Endothelial cell of umbilical vein (primary cell): ENCODE measurements at regions of chr3 and their contacts with region 1.

Region 1: GRCh38 chr3:111967651-111968274 is 11.1 kb upstream of the ABHD10 start:
- DNase-seq: peak; percentile 84
- H3K4me3 ChIP-seq: no peak overlapping the region
- H3K27ac ChIP-seq: peak overlapping the region; percentile 88
- H3K4me1 ChIP-seq: peaks cover 26% of the 10 kb centered on the region
- H3K27me3 ChIP-seq: no peaks in the 10 kb centered on the region
- CTCF ChIP-seq: peak; percentile 78 to 87
- POLR2A ChIP-seq: no peak

Region 2: GRCh38 chr3:111859974-111860859 is 107.5 kb before region 1 on chr3:
- CTCF ChIA-PET with region 1: interaction called, 53 read pairs
- POLR2A ChIA-PET with region 1: interaction called, 6 read pairs
- dilution Hi-C with region 1: no loop called
- intact Hi-C with region 1: loop called (anchors 1 kb)
- DNase-seq: peak; percentile 88
- H3K4me3 ChIP-seq: peak overlapping the region; percentile 75 to 95 (median 93)
- H3K27ac ChIP-seq: peak overlapping the region; percentile 98
- H3K4me1 ChIP-seq: peaks cover 46% of the 10 kb centered on the region
- H3K27me3 ChIP-seq: no peaks in the 10 kb centered on the region
- CTCF ChIP-seq: peak; percentile 32 to 41
- POLR2A ChIP-seq: peak; percentile 19

Region 3: DNA sequence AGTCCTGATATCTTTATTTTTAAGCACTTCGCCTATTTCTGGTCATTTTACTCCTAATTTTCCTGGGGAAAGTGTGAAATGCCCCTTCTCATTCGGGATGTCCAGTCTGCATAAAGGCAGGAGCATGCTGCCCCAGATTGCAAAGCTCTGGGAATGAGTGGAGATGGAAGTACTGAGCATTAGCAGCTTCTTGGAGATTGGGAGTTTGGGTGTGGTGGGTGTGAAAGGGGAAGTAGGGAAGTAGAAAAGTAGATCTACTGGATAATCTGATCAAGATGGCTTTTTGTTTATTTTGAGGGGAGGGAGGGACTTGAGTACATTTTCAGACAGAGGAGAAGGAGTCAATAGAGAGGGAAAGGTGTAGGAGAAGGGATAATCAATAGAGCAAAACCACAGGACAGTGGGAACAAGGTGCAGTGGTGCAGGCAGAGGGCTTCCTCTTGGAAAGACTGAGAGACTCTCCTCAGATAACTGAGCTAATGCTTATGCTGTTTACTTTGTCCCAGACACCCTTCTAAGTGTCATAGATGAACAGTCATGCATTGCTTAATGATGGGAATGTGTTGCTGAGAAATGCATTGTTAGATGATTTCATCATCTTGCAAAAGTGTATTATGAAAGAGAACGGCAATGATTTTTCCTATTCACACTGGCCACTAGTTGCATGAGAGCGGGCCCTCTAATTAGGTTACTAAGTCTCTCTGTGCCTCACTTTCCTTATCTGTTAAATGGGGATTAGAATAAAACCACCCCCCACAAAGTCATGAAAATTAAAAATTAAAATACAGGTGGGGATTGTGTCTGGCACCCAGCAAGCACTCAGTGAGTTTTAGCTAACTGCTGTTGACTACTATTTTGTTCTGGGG is 63.2 kb before region 1 on chr3:
- CTCF ChIA-PET with region 1: interaction called, 239 read pairs
- POLR2A ChIA-PET with region 1: no interaction called
- dilution Hi-C with region 1: no loop called
- intact Hi-C with region 1: no loop called
- DNase-seq: peak; percentile 53
- H3K4me3 ChIP-seq: no peak overlapping the region
- H3K27ac ChIP-seq: peak overlapping the region; percentile 54
- H3K4me1 ChIP-seq: peaks cover 31% of the 10 kb centered on the region
- H3K27me3 ChIP-seq: no peaks in the 10 kb centered on the region
- CTCF ChIP-seq: no peak
- POLR2A ChIP-seq: no peak

Region 4: GRCh38 chr3:111924283-111924682 is 43.5 kb before region 1 on chr3:
- CTCF ChIA-PET with region 1: interaction called, 3 read pairs
- POLR2A ChIA-PET with region 1: no interaction called
- dilution Hi-C with region 1: no loop called
- intact Hi-C with region 1: loop called (anchors 1 kb)
- DNase-seq: peak; percentile 99
- H3K4me3 ChIP-seq: no peak overlapping the region
- H3K27ac ChIP-seq: peak overlapping the region; percentile 69
- H3K4me1 ChIP-seq: peaks cover 29% of the 10 kb centered on the region
- H3K27me3 ChIP-seq: no peaks in the 10 kb centered on the region
- CTCF ChIP-seq: no peak
- POLR2A ChIP-seq: no peak

Region 5: GRCh38 chr3:111947231-111947630 is 20.5 kb before region 1 on chr3:
- CTCF ChIA-PET with region 1: interaction called, 20 read pairs
- POLR2A ChIA-PET with region 1: no interaction called
- dilution Hi-C with region 1: no loop called
- intact Hi-C with region 1: loop called (anchors 1 kb)
- DNase-seq: peak; percentile 89
- H3K4me3 ChIP-seq: no peak overlapping the region
- H3K27ac ChIP-seq: peak overlapping the region; percentile 79
- H3K4me1 ChIP-seq: peaks cover 24% of the 10 kb centered on the region
- H3K27me3 ChIP-seq: no peaks in the 10 kb centered on the region
- CTCF ChIP-seq: no peak
- POLR2A ChIP-seq: no peak

Region 6: GRCh38 chr3:111978493-111979433 is 11.0 kb after region 1 on chr3 and contains the start of gene ABHD10:
- CTCF ChIA-PET with region 1: interaction called, 26 read pairs
- POLR2A ChIA-PET with region 1: interaction called, 4 read pairs
- dilution Hi-C with region 1: no loop called
- intact Hi-C with region 1: no loop called
- DNase-seq: peak; percentile 99
- H3K4me3 ChIP-seq: peak within 1 kb of the TSS; percentile 80 to 96 (median 96)
- H3K27ac ChIP-seq: peak within 1 kb of the TSS; percentile 33
- H3K4me1 ChIP-seq: peaks cover 21% of the 10 kb centered on the region
- H3K27me3 ChIP-seq: no peaks in the 10 kb centered on the region
- CTCF ChIP-seq: no peak
- POLR2A ChIP-seq: peak; percentile 90
- total RNA-seq, gene ABHD10: 26.2 and 37.0 TPM in 2 replicates

Region 7: GRCh38 chr3:112013058-112013783 is 45.5 kb after region 1 on chr3:
- CTCF ChIA-PET with region 1: interaction called, 13 read pairs
- POLR2A ChIA-PET with region 1: interaction called, 3 read pairs
- dilution Hi-C with region 1: no loop called
- intact Hi-C with region 1: loop called (anchors 1 kb)
- DNase-seq: peak; percentile 70
- H3K4me3 ChIP-seq: no peak overlapping the region
- H3K27ac ChIP-seq: no peak overlapping the region
- H3K4me1 ChIP-seq: no peaks in the 10 kb centered on the region
- H3K27me3 ChIP-seq: no peaks in the 10 kb centered on the region
- CTCF ChIP-seq: peak; percentile 64 to 69
- POLR2A ChIP-seq: no peak

Region 8: DNA sequence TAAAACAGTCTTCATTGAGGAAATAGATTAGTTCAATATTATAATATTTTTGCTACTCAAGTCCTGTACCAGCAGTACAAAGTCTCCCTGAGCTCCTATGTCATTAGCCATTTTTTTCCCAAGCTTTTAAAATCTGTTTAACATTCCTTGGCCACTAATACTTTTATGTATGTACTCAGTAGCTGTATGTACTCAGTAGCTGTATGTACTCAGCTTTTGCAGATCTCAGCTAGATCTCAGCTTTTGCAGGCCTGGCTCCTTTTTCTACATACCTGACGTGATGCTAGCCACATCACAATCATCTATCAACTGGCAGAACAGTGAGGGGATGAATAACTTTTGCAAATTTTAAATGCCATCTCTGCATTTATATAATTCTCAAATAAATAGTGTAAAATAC is 312.5 kb after region 1 on chr3:
- CTCF ChIA-PET with region 1: no interaction called
- POLR2A ChIA-PET with region 1: no interaction called
- dilution Hi-C with region 1: no loop called
- intact Hi-C with region 1: no loop called
- DNase-seq: no peak
- H3K4me3 ChIP-seq: no peak overlapping the region
- H3K27ac ChIP-seq: no peak overlapping the region
- H3K4me1 ChIP-seq: no peaks in the 10 kb centered on the region
- H3K27me3 ChIP-seq: peaks cover 11 to 14% of the 10 kb centered on the region in 2 experiments
- CTCF ChIP-seq: no peak
- POLR2A ChIP-seq: no peak